ENCODE measurements at regions of chr6 and their contacts with region 1.

Region 1: GRCh38 chr6:56637640-56638039 is 5.0 kb downstream of the DST start:
- DNase-seq: peak; percentile 7
- ATAC-seq: peak; percentile 52; the same call in 2 of the 3 replicates
- H3K4me3 ChIP-seq: no peak overlapping the region
- H3K27ac ChIP-seq: no peak overlapping the region
- H3K4me1 ChIP-seq: no peaks in the 10 kb centered on the region
- H3K27me3 ChIP-seq: no peaks in the 10 kb centered on the region
- CTCF ChIP-seq: peak; percentile 51 to 59 (median 55); a peak in 5 of 6 replicates
- EP300 ChIP-seq: no peak
- POLR2A ChIP-seq: no peak
- RAD21 ChIP-seq: peak; percentile 74

Region 2: GRCh38 chr6:56624046-56624727 is 13.5 kb before region 1 on chr6:
- CTCF ChIA-PET with region 1: interaction called, 10 read pairs
- POLR2A ChIA-PET with region 1: interaction called, 3 read pairs
- RAD21 ChIA-PET with region 1: interaction called, 4 read pairs
- SMC1A ChIA-PET with region 1: interaction called, 5 read pairs
- in situ Hi-C with region 1: no loop called
- intact Hi-C with region 1: no loop called
- DNase-seq: no peak
- ATAC-seq: no peak
- H3K4me3 ChIP-seq: no peak overlapping the region
- H3K27ac ChIP-seq: no peak overlapping the region
- H3K4me1 ChIP-seq: no peaks in the 10 kb centered on the region
- H3K27me3 ChIP-seq: no peaks in the 10 kb centered on the region
- CTCF ChIP-seq: no peak
- EP300 ChIP-seq: no peak
- POLR2A ChIP-seq: no peak
- RAD21 ChIP-seq: no peak

Region 3: DNA sequence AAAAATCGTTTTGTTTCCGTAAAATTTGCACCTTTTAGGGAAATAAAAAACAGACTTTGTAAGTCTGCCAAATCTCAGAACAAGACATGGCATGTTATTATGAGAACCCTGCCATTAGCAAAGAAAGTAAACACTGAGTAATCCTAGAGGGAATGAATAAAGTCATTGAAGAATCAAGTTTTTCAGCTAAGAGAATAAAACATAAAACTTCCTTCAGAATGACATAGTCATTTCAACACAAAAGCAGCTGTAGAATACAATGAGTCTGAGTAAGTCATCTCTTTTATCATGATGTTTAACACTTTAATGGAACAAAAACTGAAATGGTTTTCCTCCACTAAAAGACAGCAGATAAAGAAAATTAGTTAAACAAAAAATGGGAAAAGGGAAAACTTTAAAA is 15.4 kb after region 1 on chr6:
- CTCF ChIA-PET with region 1: interaction called, 22 read pairs
- POLR2A ChIA-PET with region 1: no interaction called
- RAD21 ChIA-PET with region 1: interaction called, 3 read pairs
- SMC1A ChIA-PET with region 1: interaction called, 13 read pairs
- in situ Hi-C with region 1: no loop called
- intact Hi-C with region 1: no loop called
- DNase-seq: no peak
- ATAC-seq: no peak
- H3K4me3 ChIP-seq: no peak overlapping the region
- H3K27ac ChIP-seq: no peak overlapping the region
- H3K4me1 ChIP-seq: no peaks in the 10 kb centered on the region
- H3K27me3 ChIP-seq: no peaks in the 10 kb centered on the region
- CTCF ChIP-seq: no peak
- EP300 ChIP-seq: no peak
- POLR2A ChIP-seq: no peak
- RAD21 ChIP-seq: no peak

Region 4: GRCh38 chr6:56693246-56693607 is 55.6 kb after region 1 on chr6:
- CTCF ChIA-PET with region 1: interaction called, 57 read pairs
- POLR2A ChIA-PET with region 1: no interaction called
- RAD21 ChIA-PET with region 1: interaction called, 13 read pairs
- SMC1A ChIA-PET with region 1: interaction called, 13 read pairs
- in situ Hi-C with region 1: no loop called
- intact Hi-C with region 1: no loop called
- DNase-seq: no peak
- ATAC-seq: no peak
- H3K4me3 ChIP-seq: no peak overlapping the region
- H3K27ac ChIP-seq: no peak overlapping the region
- H3K4me1 ChIP-seq: peaks cover 12% of the 10 kb centered on the region
- H3K27me3 ChIP-seq: no peaks in the 10 kb centered on the region
- CTCF ChIP-seq: no peak
- EP300 ChIP-seq: no peak
- POLR2A ChIP-seq: no peak
- RAD21 ChIP-seq: no peak

Region 5: DNA sequence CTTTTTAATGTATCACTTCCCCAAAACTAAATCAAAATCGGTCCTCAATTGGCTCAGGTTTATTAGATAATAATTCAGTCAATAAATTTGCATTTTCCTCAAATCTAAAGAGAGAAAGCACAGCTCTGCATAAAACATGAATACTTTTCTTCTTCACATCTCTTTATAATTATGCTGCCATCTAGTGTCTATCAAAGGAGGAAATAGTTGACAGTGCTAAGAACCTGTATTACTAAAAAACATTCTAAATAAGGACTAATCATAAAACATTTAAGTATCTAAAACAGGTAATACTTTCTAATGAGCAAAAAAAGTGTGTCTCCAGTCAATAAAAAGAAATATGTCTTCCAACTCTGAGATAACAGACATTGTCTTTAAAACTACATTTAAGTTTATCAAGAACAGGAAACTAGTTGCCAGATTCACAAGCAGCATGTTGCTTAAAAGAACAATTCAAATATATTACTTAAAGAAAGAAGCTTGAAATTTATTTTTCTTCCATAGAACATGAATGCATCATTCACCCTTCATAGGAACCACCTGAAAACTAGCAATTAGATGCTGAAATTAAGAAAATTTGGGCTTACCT is 61.5 kb after region 1 on chr6:
- CTCF ChIA-PET with region 1: interaction called, 57 read pairs
- POLR2A ChIA-PET with region 1: no interaction called
- RAD21 ChIA-PET with region 1: interaction called, 13 read pairs
- SMC1A ChIA-PET with region 1: interaction called, 13 read pairs
- in situ Hi-C with region 1: no loop called
- intact Hi-C with region 1: loop called (anchors 1 kb)
- DNase-seq: no peak
- ATAC-seq: peak; percentile 69
- H3K4me3 ChIP-seq: no peak overlapping the region
- H3K27ac ChIP-seq: no peak overlapping the region
- H3K4me1 ChIP-seq: no peaks in the 10 kb centered on the region
- H3K27me3 ChIP-seq: no peaks in the 10 kb centered on the region
- CTCF ChIP-seq: peak; percentile 26 to 43 (median 26); a peak in 3 of 6 replicates
- EP300 ChIP-seq: no peak
- POLR2A ChIP-seq: no peak
- RAD21 ChIP-seq: peak; percentile 45; the same call in 1 of the 2 replicates

Measured in GM12878 (cell line).